Gastrocnemius medialis (tissue), 4 donors: ENCODE measurements at regions of chr2 and their contacts with region 1.

Region 1: DNA sequence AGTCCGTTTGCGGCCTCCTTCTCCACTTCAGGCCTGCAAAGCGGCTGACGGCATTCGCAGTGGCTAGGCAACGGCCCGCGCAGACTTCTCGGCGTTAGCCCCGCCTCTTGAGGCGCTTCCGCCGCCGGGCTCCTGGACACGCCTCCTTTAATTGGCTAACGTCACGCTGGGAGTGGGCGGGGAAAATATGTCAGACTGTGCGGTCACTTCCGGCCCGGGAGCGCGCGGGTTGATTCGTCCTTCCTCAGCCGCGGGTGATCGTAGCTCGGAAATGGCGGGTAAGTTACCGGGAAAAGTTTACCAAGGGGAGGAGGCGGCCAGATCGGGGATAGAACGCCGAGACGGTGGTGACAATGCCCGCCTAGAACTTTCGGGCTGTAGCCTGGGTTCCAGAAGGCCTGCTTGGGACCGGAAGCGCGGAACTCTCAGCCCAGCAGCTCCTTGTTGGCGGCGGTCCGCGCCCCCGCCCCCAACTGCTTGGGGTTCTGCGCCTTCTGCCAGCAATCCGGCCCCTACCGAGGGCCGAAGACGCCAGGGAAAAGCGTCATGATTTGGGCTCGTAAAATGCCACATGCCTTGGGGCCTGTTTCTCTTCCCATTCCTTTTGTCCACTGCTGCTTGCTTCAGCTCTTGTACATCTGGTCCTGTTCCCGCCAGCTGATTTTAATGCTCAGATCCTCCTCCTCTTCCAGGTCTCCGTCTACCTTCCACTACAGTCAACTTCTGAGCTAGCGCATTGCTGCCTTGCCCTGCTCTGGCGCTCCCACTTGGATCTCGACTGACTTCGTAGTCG is at the start of gene HAT1:
- DNase-seq: peak; percentile 96
- ATAC-seq: peak; percentile 97 to 98
- H3K4me3 ChIP-seq: peak within 1 kb of the TSS; percentile 84 to 94 (median 86)
- H3K27ac ChIP-seq: peak within 1 kb of the TSS; percentile 92 to 94 (median 93)
- H3K4me1 ChIP-seq: peaks cover 23 to 24% of the 10 kb centered on the region in 2 donors
- H3K27me3 ChIP-seq: no peaks in the 10 kb centered on the region
- CTCF ChIP-seq: no peak
- POLR2A ChIP-seq: peak; percentile 61 to 78
- total RNA-seq, gene HAT1: 30.6 to 61.9 (median 50.0) TPM

Region 2: GRCh38 chr2:171390941-171391516 is 531.4 kb before region 1 on chr2:
- in situ Hi-C with region 1: no loop called
- intact Hi-C with region 1: no loop called
- DNase-seq: no peak
- ATAC-seq: no peak
- H3K4me3 ChIP-seq: no peak overlapping the region
- H3K27ac ChIP-seq: no peak overlapping the region
- H3K4me1 ChIP-seq: peaks cover 6 to 7% of the 10 kb centered on the region in 2 donors
- H3K27me3 ChIP-seq: no peaks in the 10 kb centered on the region
- CTCF ChIP-seq: no peak
- POLR2A ChIP-seq: no peak

Region 3: GRCh38 chr2:171687287-171688128 is 234.9 kb before region 1 on chr2 and contains the start of gene DYNC1I2:
- in situ Hi-C with region 1: no loop called
- intact Hi-C with region 1: loop called (anchors 5 kb)
- DNase-seq: peak; percentile 87 to 89
- ATAC-seq: peak; percentile 99 to 100
- H3K4me3 ChIP-seq: peak within 1 kb of the TSS; percentile 85 to 95 (median 92)
- H3K27ac ChIP-seq: peak within 1 kb of the TSS; percentile 81 to 93 (median 88)
- H3K4me1 ChIP-seq: peaks cover 13 to 16% of the 10 kb centered on the region in 2 donors
- H3K27me3 ChIP-seq: no peaks in the 10 kb centered on the region
- CTCF ChIP-seq: peak in 1 of 5 experiments; percentile 41
- POLR2A ChIP-seq: peak; percentile 17 to 26
- total RNA-seq, gene DYNC1I2: 40.0 to 93.7 (median 59.3) TPM

Region 4: DNA sequence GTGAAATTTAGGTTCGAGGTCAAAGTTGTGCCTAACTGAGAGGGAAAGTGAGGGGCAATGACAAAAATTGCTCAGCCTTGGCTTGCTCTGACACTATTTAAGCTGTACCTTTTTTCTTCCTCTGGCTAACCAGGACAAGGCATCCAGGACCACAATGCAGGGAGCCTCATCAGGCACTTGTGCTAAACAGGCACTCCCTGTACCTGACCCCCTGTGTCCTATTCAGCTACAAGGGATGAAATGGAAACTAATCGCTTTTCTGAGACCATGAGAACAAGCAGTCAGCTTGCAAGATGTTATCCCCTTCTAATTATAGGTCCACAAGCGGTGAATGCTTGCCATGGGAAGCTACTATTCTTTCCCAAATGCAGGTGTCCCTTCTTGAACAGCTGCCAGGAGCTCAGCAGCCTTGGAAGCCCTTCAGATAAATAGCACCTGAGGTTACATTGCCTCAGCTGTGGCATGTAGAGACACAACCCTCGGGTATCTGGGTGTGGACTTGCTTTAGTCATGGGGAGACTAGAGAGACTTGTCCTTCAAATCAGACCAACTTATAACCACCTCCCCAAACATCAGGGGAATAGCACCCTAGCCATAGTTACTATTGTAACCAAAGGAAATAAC is 485.8 kb after region 1 on chr2:
- in situ Hi-C with region 1: no loop called
- intact Hi-C with region 1: no loop called
- DNase-seq: no peak
- ATAC-seq: peak; percentile 34 to 51
- H3K4me3 ChIP-seq: no peak overlapping the region
- H3K27ac ChIP-seq: peak overlapping the region; percentile 37 to 71 (median 48)
- H3K4me1 ChIP-seq: peaks cover 4 to 9% of the 10 kb centered on the region in 2 donors
- H3K27me3 ChIP-seq: no peaks in the 10 kb centered on the region
- CTCF ChIP-seq: no peak
- POLR2A ChIP-seq: no peak